Activated CD8-positive, alpha-beta T cell treated with anti-CD3 and anti-CD28 coated beads for 36 hours (primary cell): ENCODE measurements at regions of chr22 and their contacts with region 1.

Region 1: DNA sequence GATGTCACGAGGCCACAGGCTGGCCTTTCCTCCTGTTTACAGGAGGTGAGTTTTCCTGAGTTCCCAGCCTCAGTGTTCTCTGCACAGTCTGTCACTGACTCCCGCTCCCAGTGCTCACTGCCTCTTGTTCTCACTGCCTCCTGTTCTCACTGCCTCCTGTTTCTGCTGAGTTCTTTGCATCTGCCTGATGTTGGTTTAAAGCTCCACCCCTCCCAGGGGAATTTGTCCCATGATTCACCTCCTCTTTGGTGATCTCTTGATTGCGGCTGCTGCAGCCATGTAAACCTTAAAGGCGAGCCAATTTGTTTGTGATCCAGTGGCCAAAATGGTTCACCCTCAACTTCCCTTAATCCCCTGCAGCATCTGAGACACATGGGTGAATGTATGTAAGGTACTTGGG is 6.0 kb upstream of the TUBA8 start:
- DNase-seq: no peak
- ATAC-seq: no peak
- H3K4me3 Mint-ChIP-seq: no peak overlapping the region
- H3K27ac Mint-ChIP-seq: no peak overlapping the region
- H3K4me1 Mint-ChIP-seq: peaks cover 30% of the 10 kb centered on the region
- H3K27me3 Mint-ChIP-seq: peaks cover 15% of the 10 kb centered on the region
- CTCF ChIP-seq: no peak

Region 2: GRCh38 chr22:17824457-17824856 is 280.1 kb before region 1 on chr22:
- CTCF ChIA-PET with region 1: no interaction called
- POLR2A ChIA-PET with region 1: no interaction called
- intact Hi-C with region 1: no loop called
- DNase-seq: no peak
- ATAC-seq: no peak
- H3K4me3 Mint-ChIP-seq: no peak overlapping the region
- H3K27ac Mint-ChIP-seq: no peak overlapping the region
- H3K4me1 Mint-ChIP-seq: no peaks in the 10 kb centered on the region
- H3K27me3 Mint-ChIP-seq: no peaks in the 10 kb centered on the region
- CTCF ChIP-seq: no peak

Region 3: DNA sequence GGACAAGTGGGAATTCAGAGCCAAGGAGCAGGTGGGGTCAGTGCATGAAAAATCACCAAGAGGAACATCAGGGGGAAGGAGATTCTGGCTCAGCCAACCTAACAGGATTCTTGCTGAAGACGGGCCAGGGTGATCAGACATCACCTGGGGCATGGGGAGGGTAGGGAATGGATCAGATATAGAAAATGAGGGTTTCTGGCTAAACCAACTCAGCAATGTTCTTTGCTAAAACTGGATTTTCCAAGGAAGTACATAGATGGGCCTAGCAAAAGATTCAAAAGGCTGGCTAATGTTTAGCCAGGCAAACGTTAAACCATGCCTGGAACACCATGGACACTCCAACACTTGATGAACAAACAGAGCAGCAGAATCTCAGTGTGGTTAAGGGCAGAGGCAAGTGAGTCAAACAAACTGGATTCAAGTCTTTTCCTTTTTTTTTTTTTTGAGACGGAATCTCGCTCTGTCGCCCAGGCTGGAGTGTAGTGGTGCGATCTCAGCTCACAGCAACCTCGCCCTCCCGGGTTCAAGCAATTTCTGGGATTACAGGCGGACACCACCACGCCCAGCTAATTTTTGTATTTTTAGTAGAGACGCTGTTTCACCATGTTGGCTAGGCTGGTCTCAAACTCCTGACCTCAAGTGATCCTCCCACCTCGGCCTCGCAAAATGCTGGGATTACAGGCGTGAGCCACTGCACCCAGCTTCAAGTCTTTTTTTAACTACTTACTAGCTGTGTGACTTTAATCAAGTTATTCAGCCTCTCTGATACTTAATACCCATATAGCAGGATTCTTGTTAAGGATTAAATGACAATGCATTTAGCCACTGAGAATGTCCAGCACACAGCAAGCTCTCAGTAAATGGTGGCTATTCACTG is 150.0 kb before region 1 on chr22:
- CTCF ChIA-PET with region 1: no interaction called
- POLR2A ChIA-PET with region 1: no interaction called
- intact Hi-C with region 1: no loop called
- DNase-seq: no peak
- ATAC-seq: no peak
- H3K4me3 Mint-ChIP-seq: no peak overlapping the region
- H3K27ac Mint-ChIP-seq: no peak overlapping the region
- H3K4me1 Mint-ChIP-seq: no peaks in the 10 kb centered on the region
- H3K27me3 Mint-ChIP-seq: no peaks in the 10 kb centered on the region
- CTCF ChIP-seq: no peak

Region 4: GRCh38 chr22:18119409-18120110 is 15.0 kb after region 1 on chr22:
- CTCF ChIA-PET with region 1: no interaction called
- POLR2A ChIA-PET with region 1: no interaction called
- intact Hi-C with region 1: no loop called
- DNase-seq: peak; percentile 32
- ATAC-seq: peak; percentile 42
- H3K4me3 Mint-ChIP-seq: no peak overlapping the region
- H3K27ac Mint-ChIP-seq: peak overlapping the region; percentile 57
- H3K4me1 Mint-ChIP-seq: peaks cover 13% of the 10 kb centered on the region
- H3K27me3 Mint-ChIP-seq: no peaks in the 10 kb centered on the region
- CTCF ChIP-seq: no peak

Region 5: DNA sequence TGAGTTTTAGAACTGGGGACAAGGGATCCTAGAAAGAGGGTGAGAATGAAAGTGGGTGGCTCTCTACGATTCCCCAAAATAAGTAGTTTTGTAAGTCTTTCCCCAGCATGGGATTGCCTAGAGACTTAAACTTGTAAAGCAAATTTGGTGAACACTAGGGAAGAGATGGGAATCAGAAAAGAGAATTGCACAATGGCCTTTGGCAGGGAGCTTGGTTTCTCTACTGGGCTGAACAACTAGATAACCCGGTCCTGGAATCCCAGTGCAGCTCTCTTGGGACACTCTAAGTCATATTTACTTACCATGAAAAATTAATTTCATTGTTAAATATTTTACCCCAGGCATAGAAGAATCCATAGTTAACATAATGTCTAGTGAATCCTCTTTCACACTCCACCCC is 28.9 kb after region 1 on chr22:
- CTCF ChIA-PET with region 1: no interaction called
- POLR2A ChIA-PET with region 1: no interaction called
- intact Hi-C with region 1: no loop called
- DNase-seq: no peak
- ATAC-seq: no peak
- H3K4me3 Mint-ChIP-seq: no peak overlapping the region
- H3K27ac Mint-ChIP-seq: no peak overlapping the region
- H3K4me1 Mint-ChIP-seq: no peaks in the 10 kb centered on the region
- H3K27me3 Mint-ChIP-seq: no peaks in the 10 kb centered on the region
- CTCF ChIP-seq: no peak

Region 6: DNA sequence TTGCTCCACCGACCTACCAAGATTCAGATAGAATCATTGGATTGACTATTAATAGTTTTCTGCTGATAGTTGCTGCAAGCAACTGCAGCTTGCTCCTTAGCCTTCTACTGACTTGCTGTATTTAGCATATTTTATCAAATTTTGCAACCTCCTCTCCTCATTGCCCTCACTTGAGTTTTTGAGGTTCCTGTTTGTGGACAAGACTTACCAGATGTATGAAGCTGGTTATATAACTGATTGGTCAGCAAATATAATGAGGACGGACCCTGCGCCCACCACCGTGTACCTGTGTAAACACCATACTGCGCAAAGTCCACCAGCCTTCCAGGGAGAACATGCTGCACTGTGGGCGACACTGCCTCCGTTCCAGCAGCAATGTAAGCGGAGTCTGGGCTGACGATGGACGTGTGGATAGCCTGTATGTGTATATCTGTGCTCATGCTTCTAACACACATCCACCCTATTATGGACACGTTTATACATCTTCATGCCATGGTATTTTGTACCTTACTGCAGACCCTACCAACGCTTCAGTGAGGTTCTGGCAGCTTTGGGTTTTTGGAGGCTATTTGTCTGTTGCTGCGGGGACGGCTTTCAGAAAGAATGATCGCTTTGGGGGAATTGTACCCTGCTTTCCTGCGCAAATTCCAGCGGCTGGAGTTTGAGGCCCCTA is 43.9 kb after region 1 on chr22:
- CTCF ChIA-PET with region 1: no interaction called
- POLR2A ChIA-PET with region 1: interaction called, 3 read pairs
- intact Hi-C with region 1: loop called (anchors 5 kb)
- DNase-seq: no peak
- ATAC-seq: no peak
- H3K4me3 Mint-ChIP-seq: peak overlapping the region; percentile 79
- H3K27ac Mint-ChIP-seq: no peak overlapping the region
- H3K4me1 Mint-ChIP-seq: peaks cover 28% of the 10 kb centered on the region
- H3K27me3 Mint-ChIP-seq: no peaks in the 10 kb centered on the region
- CTCF ChIP-seq: no peak